Calu3 (cell line): ENCODE measurements at regions of chr6 and their contacts with region 1.

Region 1: DNA sequence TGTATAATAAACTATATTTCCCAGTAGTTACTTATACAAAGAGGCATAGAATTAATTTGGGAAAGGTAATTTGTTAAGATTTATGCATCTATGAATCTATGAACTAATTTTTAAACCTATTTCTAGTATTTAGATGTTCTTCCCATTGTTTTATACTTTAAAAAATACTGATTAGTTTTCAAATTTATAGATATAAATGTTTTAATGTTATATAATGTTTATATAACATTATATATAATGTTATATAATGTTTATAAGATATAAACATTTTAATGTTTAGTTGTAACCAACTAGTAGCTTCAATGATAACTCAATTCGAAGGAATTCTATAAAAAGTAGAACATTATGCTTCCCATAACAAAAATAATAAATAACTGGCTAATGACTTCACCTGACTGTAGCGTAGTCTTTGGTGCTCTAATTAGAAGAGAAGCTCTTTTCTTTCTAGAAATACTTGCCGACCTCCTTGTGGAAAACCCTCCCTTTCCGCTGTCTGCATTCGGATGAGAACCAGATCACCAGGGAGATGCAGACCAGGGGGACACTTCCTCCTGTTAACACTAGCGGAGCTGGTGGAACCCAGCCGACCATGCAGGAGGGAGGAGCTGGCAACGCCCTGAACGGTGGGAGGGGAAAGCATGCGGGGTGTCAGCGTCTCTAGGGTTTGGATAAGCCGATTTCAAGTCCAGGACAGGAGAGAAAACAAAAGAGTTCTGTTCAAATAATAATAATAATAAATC is 158.4 kb downstream of the OR2B2 start:
- DNase-seq: peak; percentile 87
- H3K4me3 Mint-ChIP-seq: peak overlapping the region; percentile 79
- H3K27ac Mint-ChIP-seq: peak overlapping the region; percentile 88
- H3K4me1 Mint-ChIP-seq: peaks cover 33% of the 10 kb centered on the region
- H3K27me3 Mint-ChIP-seq: no peaks in the 10 kb centered on the region
- CTCF ChIP-seq: no peak

Region 2: GRCh38 chr6:27177485-27178406 is 576.1 kb before region 1 on chr6:
- CTCF ChIA-PET with region 1: interaction called, 10 read pairs
- intact Hi-C with region 1: no loop called
- DNase-seq: peak; percentile 92
- H3K4me3 Mint-ChIP-seq: peak overlapping the region; percentile 86
- H3K27ac Mint-ChIP-seq: peak overlapping the region; percentile 99
- H3K4me1 Mint-ChIP-seq: no peaks in the 10 kb centered on the region
- H3K27me3 Mint-ChIP-seq: peaks cover 20% of the 10 kb centered on the region
- CTCF ChIP-seq: peak; percentile 45

Region 3: GRCh38 chr6:27312146-27312949 is 441.5 kb before region 1 on chr6 and contains the start of gene POM121L2:
- CTCF ChIA-PET with region 1: interaction called, 9 read pairs
- intact Hi-C with region 1: loop called (anchors 10 kb)
- DNase-seq: peak; percentile 84
- H3K4me3 Mint-ChIP-seq: peak within 1 kb of the TSS; percentile 65
- H3K27ac Mint-ChIP-seq: no peak within 1 kb of the TSS
- H3K4me1 Mint-ChIP-seq: no peaks in the 10 kb centered on the region
- H3K27me3 Mint-ChIP-seq: no peaks in the 10 kb centered on the region
- CTCF ChIP-seq: peak; percentile 87
- total RNA-seq, gene POM121L2: not detected in 2 replicates

Region 4: GRCh38 chr6:27565821-27566766 is 187.7 kb before region 1 on chr6:
- CTCF ChIA-PET with region 1: no interaction called
- intact Hi-C with region 1: no loop called
- DNase-seq: no peak
- H3K4me3 Mint-ChIP-seq: no peak overlapping the region
- H3K27ac Mint-ChIP-seq: no peak overlapping the region
- H3K4me1 Mint-ChIP-seq: peaks cover 16% of the 10 kb centered on the region
- H3K27me3 Mint-ChIP-seq: peaks cover 7% of the 10 kb centered on the region
- CTCF ChIP-seq: no peak

Region 5: GRCh38 chr6:27608916-27609883 is 144.6 kb before region 1 on chr6:
- CTCF ChIA-PET with region 1: interaction called, 10 read pairs
- intact Hi-C with region 1: no loop called
- DNase-seq: peak; percentile 78
- H3K4me3 Mint-ChIP-seq: no peak overlapping the region
- H3K27ac Mint-ChIP-seq: peak overlapping the region; percentile 57
- H3K4me1 Mint-ChIP-seq: peaks cover 28% of the 10 kb centered on the region
- H3K27me3 Mint-ChIP-seq: no peaks in the 10 kb centered on the region
- CTCF ChIP-seq: peak; percentile 83

Region 6: DNA sequence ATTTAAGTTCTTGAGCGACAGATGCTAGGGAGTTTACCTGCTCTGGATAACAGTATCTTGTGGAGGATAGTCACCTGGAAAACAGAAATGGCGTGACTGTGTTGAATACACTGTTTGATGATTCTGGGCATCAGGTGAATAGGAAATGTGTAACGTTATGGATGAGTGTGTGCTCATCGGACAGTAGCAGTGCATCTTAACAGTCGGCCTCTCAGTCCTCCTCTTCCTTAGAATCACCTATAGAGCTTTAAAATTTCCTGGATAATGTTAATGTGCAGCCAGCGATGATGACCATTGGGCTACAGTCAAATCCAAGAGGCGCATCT is 59.3 kb before region 1 on chr6:
- CTCF ChIA-PET with region 1: interaction called, 5 read pairs
- intact Hi-C with region 1: loop called (anchors 2 kb)
- DNase-seq: no peak
- H3K4me3 Mint-ChIP-seq: peak overlapping the region; percentile 94
- H3K27ac Mint-ChIP-seq: peak overlapping the region; percentile 98
- H3K4me1 Mint-ChIP-seq: no peaks in the 10 kb centered on the region
- H3K27me3 Mint-ChIP-seq: no peaks in the 10 kb centered on the region
- CTCF ChIP-seq: no peak

Region 7: DNA sequence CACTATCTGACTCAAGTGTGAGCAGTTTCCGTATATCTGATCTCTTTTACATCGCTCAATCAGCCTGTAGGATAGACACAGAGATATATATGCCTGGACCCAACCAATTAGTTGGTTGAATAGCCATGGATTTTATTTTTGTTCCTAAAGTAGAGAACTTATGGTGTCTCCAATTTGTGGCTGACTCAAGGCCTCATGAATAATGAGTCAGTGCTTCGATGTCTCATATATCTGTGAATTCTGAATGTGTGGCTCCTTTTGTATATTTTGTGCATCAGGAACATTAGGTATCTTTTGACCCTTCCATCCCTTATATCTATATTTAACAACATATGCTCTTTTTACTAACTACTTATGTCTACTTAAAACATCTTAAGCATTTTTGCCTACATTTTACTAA is 93.9 kb after region 1 on chr6:
- CTCF ChIA-PET with region 1: no interaction called
- intact Hi-C with region 1: no loop called
- DNase-seq: no peak
- H3K4me3 Mint-ChIP-seq: peak overlapping the region; percentile 23
- H3K27ac Mint-ChIP-seq: peak overlapping the region; percentile 62
- H3K4me1 Mint-ChIP-seq: peaks cover 24% of the 10 kb centered on the region
- H3K27me3 Mint-ChIP-seq: no peaks in the 10 kb centered on the region
- CTCF ChIP-seq: no peak

Region 8: GRCh38 chr6:27957516-27957915 is 203.7 kb after region 1 on chr6:
- CTCF ChIA-PET with region 1: no interaction called
- intact Hi-C with region 1: no loop called
- DNase-seq: no peak
- H3K4me3 Mint-ChIP-seq: no peak overlapping the region
- H3K27ac Mint-ChIP-seq: no peak overlapping the region
- H3K4me1 Mint-ChIP-seq: no peaks in the 10 kb centered on the region
- H3K27me3 Mint-ChIP-seq: no peaks in the 10 kb centered on the region
- CTCF ChIP-seq: no peak

Region 9: DNA sequence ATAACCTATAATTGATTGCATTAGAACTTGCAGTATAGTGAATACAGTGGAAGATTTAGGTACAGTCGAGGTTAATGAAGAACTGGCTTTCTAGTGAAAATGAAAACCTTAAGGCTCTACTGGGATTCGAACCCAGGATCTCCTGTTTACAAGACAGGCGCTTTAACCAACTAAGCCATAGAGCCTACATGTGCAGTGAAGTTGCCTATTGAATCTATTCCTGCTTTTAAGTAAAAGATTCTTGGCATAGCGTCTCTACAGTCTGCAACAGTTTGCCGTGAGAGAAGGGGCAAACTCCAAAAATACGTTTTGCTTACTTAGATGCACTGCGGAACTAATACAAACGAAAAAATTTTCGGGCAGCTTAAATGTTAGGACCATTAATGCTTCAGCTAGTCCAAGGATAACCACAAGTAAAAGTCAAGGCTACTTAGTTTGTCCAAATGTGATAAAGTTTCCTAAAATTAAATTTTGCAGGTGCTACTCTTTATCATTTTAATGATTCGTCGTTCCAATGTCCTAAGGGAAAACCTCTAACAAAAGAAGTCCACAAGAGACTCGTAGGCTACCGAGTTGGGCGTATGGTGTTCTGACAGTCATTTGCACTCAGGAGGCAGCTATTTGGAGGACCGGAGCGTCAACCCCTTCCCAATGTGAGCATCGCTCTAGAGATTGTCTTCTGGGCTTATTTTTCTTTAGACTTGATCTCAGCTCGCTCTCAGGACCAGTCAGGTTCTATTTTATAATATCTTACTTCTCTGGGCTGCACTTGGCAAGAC is 720.8 kb after region 1 on chr6:
- CTCF ChIA-PET with region 1: no interaction called
- intact Hi-C with region 1: loop called (anchors 5 kb)
- DNase-seq: peak; percentile 47
- H3K4me3 Mint-ChIP-seq: peak overlapping the region; percentile 31
- H3K27ac Mint-ChIP-seq: peak overlapping the region; percentile 78
- H3K4me1 Mint-ChIP-seq: no peaks in the 10 kb centered on the region
- H3K27me3 Mint-ChIP-seq: peaks cover 22% of the 10 kb centered on the region
- CTCF ChIP-seq: no peak